ENCODE measurements at regions of chr5 and their contacts with region 1.

Region 1: DNA sequence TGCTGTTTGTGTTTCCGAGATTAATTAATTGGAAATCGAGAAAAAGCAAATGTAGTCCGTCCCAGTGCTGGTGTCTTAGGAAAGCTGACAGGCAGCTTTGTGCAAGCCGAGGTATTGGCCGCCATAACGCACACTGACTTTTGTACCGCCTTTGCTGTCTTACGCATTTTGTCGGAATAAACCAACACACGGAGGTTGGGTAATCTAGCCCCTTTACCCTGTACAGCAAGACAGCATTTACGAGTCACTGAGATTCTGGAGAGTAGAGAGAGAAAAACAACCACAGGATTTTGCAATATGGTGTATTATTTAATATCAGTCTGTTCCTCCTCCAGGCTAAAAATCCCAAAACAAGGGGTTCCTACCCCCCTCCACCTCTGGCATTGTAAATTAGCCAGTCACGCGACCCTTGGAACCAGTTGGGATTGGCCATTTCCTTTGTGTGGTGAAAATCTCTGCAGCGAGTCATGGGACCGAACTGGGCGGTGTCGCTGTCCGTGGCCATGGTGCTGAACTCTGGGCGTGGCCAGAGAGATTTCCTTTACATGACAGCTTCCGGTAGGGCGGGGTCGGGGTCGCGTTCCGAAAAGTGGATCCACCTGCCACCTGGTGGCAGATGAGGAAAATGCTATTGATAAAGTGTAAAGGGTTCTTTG is 10.3 kb upstream of the PCDHB1 start:
- DNase-seq: peak; percentile 92 to 96 (median 95)
- ATAC-seq: peak; percentile 96 to 100
- H3K4me3 ChIP-seq: peak overlapping the region; percentile 17
- H3K27ac ChIP-seq: no peak overlapping the region
- H3K4me1 ChIP-seq: no peaks in the 10 kb centered on the region
- H3K27me3 ChIP-seq: no peaks in the 10 kb centered on the region

Region 2: DNA sequence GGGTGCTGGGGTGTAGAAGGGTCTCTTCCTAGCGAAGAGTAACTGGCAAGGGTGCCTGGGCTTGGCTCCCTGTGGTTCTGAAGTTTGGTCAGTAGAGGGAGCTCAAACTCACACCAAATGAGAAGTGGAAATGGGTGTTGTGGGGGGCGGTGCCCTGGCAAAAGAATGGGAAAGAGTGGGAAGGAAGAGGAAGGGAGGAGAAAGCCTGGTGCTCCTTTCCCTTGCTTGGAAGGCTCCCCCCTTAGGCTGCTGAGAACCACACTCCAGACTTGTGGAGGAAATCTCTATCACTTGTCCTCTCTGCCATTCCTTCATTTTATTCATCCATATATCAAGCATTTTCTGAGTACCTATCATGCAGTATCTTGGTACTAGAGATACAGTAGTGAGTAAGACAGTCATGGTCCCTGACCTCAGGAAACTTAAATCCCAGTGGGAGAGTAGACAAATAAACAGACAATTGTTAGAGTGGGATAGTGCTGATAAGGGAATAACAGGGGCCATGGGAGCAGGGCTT is 667.9 kb before region 1 on chr5:
- intact Hi-C with region 1: loop called in 1 of 4 experiments (anchors 10 kb)
- DNase-seq: peak; percentile 85 to 91 (median 91)
- ATAC-seq: peak; percentile 81 to 91
- H3K4me3 ChIP-seq: no peak overlapping the region
- H3K27ac ChIP-seq: no peak overlapping the region
- H3K4me1 ChIP-seq: peaks cover 2% of the 10 kb centered on the region
- H3K27me3 ChIP-seq: no peaks in the 10 kb centered on the region

Region 3: DNA sequence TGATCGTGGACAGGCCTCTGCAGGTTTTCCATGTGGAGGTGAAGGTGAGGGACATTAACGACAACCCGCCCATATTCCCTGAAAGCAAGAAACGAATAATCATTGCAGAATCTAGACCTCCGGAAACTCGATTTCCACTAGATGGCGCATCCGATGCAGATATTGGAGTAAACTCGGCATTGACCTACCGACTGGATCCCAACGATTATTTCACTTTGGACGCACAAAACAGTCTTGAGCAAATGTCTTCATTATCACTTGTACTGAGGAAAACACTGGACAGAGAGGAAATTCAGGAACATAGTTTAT is 158.4 kb before region 1 on chr5:
- intact Hi-C with region 1: loop called in 1 of 4 experiments (anchors 10 kb)
- DNase-seq: no peak
- ATAC-seq: no peak
- H3K4me3 ChIP-seq: no peak overlapping the region
- H3K27ac ChIP-seq: no peak overlapping the region
- H3K4me1 ChIP-seq: no peaks in the 10 kb centered on the region
- H3K27me3 ChIP-seq: no peaks in the 10 kb centered on the region

Region 4: GRCh38 chr5:141172378-141173204 is 131.7 kb after region 1 on chr5 and contains the start of gene PCDHB7:
- intact Hi-C with region 1: no loop called
- DNase-seq: no peak
- ATAC-seq: no peak
- H3K4me3 ChIP-seq: peak within 1 kb of the TSS; percentile 39
- H3K27ac ChIP-seq: no peak within 1 kb of the TSS
- H3K4me1 ChIP-seq: no peaks in the 10 kb centered on the region
- H3K27me3 ChIP-seq: no peaks in the 10 kb centered on the region
- total RNA-seq, gene PCDHB7: 0.79 to 1.7 (median 1.6) TPM

Measured in right cardiac atrium (tissue), 5 donors.